Common myeloid progenitor, CD34-positive (primary cell): ENCODE measurements at regions of chr1 and their contacts with region 1.

Region 1: DNA sequence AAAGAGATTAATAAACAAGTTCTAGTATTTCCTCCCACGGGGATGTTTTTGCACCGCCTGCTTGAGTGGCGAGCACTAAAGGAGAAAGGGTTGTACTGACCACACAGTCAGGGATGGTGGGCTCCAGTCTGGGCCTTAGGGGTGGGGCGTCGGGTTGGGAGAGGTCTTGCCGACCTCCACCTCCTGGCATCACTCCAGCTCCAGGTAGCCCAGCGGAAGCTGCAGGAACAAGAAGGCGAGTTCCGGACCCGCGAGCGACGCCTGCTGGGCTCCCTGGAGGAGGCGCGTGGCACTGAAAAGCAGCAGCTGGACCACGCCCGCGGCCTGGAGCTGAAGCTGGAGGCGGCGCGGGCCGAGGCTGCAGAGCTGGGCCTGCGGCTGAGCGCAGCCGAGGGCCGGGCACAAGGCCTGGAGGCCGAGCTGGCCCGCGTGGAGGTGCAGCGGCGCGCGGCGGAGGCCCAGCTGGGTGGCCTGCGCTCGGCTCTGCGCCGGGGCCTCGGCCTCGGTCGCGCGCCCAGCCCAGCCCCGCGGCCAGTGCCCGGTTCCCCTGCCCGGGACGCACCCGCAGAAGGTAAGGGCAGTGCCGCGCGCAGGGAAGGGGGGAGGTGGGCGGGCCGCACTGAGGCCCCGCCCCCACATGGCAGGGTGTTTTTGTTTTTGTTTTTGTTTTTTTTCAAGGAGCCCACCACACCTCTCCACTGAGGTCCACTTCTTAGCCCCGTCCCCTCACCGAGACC is 19.7 kb downstream of the MFAP2 start:
- DNase-seq: peak; percentile 68 to 80 (median 78)
- H3K4me3 ChIP-seq: peak overlapping the region; percentile 35 to 77 (median 48)
- H3K27ac ChIP-seq: peak overlapping the region in 1 of 2 experiments; percentile 25
- H3K4me1 ChIP-seq: peaks cover 0 to 36% (median 20%) of the 10 kb centered on the region in 4 experiments
- H3K27me3 ChIP-seq: no peaks in the 10 kb centered on the region

Region 2: DNA sequence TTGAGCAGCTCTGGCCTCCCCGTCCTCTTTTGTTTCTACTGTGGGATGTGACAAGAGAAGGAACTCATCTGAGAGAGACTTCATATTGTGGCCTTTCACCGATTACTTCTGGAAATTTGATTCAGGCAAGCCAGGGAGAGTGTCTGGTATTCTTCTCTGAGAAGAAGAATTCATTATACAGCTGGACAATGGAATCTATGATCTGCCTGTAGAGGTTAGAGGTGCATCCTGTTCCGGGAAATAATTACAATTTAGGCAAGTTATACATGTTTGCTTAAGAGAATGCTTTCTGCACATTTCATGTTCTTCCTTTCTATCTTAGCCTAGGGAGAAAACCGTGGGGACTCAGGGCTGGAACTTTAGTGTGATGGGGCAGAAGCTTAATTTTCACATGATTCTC is 77.7 kb before region 1 on chr1:
- CTCF ChIA-PET with region 1: no interaction called
- POLR2A ChIA-PET with region 1: no interaction called
- DNase-seq: no peak
- H3K4me3 ChIP-seq: no peak overlapping the region
- H3K27ac ChIP-seq: no peak overlapping the region
- H3K4me1 ChIP-seq: no peaks in the 10 kb centered on the region
- H3K27me3 ChIP-seq: peaks cover 2 to 7% (median 2%) of the 10 kb centered on the region in 5 experiments

Region 3: DNA sequence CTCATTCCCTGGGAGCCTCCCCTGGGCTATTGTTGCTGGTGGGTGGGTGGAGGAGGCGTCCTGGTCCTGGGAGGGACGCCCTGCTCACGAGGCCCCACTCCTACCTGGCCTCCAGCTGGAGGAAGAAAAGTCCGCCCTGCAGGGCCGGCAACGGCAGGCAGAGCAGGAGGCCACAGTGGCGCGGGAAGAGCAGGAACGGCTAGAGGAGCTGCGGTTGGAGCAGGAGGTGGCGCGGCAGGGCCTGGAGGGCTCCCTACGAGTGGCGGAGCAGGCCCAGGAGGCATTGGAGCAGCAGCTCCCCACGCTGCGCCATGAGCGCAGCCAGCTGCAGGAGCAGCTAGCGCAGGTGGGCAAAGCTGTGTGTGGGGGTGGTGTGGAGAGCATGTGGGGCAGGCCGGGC is 14.1 kb before region 1 on chr1:
- CTCF ChIA-PET with region 1: interaction called, 24 read pairs
- POLR2A ChIA-PET with region 1: interaction called, 4 read pairs
- DNase-seq: no peak
- H3K4me3 ChIP-seq: no peak overlapping the region
- H3K27ac ChIP-seq: no peak overlapping the region
- H3K4me1 ChIP-seq: no peaks in the 10 kb centered on the region
- H3K27me3 ChIP-seq: no peaks in the 10 kb centered on the region

Region 4: GRCh38 chr1:16984717-16985116 is 24.0 kb after region 1 on chr1:
- CTCF ChIA-PET with region 1: interaction called, 14 read pairs
- POLR2A ChIA-PET with region 1: no interaction called
- DNase-seq: peak in 2 of 3 donors; percentile 66
- H3K4me3 ChIP-seq: no peak overlapping the region
- H3K27ac ChIP-seq: no peak overlapping the region
- H3K4me1 ChIP-seq: peaks cover 0 to 25% (median 18%) of the 10 kb centered on the region in 4 experiments
- H3K27me3 ChIP-seq: peaks cover 0 to 11% (median 0%) of the 10 kb centered on the region in 5 experiments

Region 5: GRCh38 chr1:17023102-17023501 is 62.4 kb after region 1 on chr1:
- CTCF ChIA-PET with region 1: interaction called, 22 read pairs
- POLR2A ChIA-PET with region 1: no interaction called
- DNase-seq: peak in 2 of 3 donors; percentile 43 to 50
- H3K4me3 ChIP-seq: no peak overlapping the region
- H3K27ac ChIP-seq: no peak overlapping the region
- H3K4me1 ChIP-seq: peaks cover 0 to 25% (median 14%) of the 10 kb centered on the region in 4 experiments
- H3K27me3 ChIP-seq: no peaks in the 10 kb centered on the region

Region 6: DNA sequence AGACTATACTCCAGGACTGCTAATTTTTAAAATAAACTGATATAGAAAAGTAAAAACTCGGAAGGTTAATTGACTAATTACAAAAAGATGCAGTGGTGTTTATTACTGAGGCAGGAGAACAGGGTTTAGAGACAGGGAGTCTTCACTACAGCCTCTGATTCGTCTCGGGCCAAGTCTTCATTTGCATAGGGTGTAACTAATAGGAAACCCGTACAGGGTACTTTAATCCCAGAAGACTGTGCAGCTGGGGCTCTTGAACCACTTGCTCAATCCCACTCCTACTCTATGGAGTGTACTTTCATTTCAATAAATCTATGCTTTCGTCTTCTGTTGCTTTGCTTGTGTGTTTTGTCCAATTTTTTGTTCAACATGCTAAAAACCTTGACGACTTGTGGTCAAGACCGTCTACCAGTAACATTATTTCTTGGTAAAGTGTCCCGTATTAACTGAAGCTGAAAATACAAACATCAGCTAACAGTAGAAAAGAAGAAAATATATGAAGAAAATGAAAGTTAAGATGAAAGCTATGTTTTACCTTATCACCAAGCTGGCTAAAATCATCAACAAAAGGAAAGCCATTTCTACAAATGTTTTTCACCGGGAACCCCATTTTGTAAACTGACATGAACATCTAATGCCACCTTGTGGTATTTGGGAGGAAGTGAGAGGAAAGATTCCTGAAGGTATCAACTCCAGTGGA is 85.1 kb after region 1 on chr1:
- CTCF ChIA-PET with region 1: interaction called, 167 read pairs
- POLR2A ChIA-PET with region 1: interaction called, 3 read pairs
- DNase-seq: peak; percentile 59 to 75 (median 70)
- H3K4me3 ChIP-seq: peak overlapping the region in 2 of 7 experiments; percentile 28 to 52
- H3K27ac ChIP-seq: no peak overlapping the region
- H3K4me1 ChIP-seq: peaks cover 0 to 4% (median 0%) of the 10 kb centered on the region in 4 experiments
- H3K27me3 ChIP-seq: no peaks in the 10 kb centered on the region